ENCODE measurements at regions of chr7 and their contacts with region 1.

Region 1: GRCh38 chr7:116236020-116236630 is 25.8 kb downstream of the TES start:
- DNase-seq: peak; percentile 74
- H3K4me3 ChIP-seq: no peak overlapping the region
- H3K27ac ChIP-seq: no peak overlapping the region
- H3K4me1 ChIP-seq: peaks cover 11% of the 10 kb centered on the region
- H3K27me3 ChIP-seq: no peaks in the 10 kb centered on the region
- CTCF ChIP-seq: peak; percentile 22 to 24
- POLR2A ChIP-seq: no peak

Region 2: GRCh38 chr7:116138202-116138801 is 97.8 kb before region 1 on chr7:
- CTCF ChIA-PET with region 1: interaction called, 15 read pairs
- POLR2A ChIA-PET with region 1: no interaction called
- dilution Hi-C with region 1: no loop called
- intact Hi-C with region 1: loop called (anchors 1 kb)
- DNase-seq: peak; percentile 81
- H3K4me3 ChIP-seq: no peak overlapping the region
- H3K27ac ChIP-seq: no peak overlapping the region
- H3K4me1 ChIP-seq: peaks cover 6% of the 10 kb centered on the region
- H3K27me3 ChIP-seq: no peaks in the 10 kb centered on the region
- CTCF ChIP-seq: peak; percentile 45 to 51
- POLR2A ChIP-seq: no peak

Region 3: DNA sequence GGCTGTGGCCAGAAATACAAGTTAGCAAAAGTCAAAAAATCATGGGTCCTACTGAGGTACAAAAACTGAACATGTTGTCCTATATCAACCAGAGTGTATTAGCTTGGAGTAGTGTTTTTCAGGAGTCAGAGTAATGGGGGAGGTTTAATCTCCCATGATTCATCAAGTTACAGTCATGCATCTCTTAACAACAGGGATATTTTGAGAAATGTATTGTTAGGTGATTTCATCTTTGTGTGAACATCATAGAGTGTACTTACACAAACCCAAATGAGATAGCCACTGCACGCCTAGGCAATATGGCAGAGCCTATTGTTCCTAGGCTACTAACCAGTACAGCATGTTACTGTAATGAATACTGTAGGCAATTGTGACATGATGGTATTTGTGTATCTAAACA is 40.7 kb before region 1 on chr7:
- CTCF ChIA-PET with region 1: interaction called, 11 read pairs
- POLR2A ChIA-PET with region 1: no interaction called
- dilution Hi-C with region 1: no loop called
- intact Hi-C with region 1: no loop called
- DNase-seq: peak; percentile 8
- H3K4me3 ChIP-seq: no peak overlapping the region
- H3K27ac ChIP-seq: no peak overlapping the region
- H3K4me1 ChIP-seq: no peaks in the 10 kb centered on the region
- H3K27me3 ChIP-seq: no peaks in the 10 kb centered on the region
- CTCF ChIP-seq: no peak
- POLR2A ChIP-seq: no peak

Region 4: DNA sequence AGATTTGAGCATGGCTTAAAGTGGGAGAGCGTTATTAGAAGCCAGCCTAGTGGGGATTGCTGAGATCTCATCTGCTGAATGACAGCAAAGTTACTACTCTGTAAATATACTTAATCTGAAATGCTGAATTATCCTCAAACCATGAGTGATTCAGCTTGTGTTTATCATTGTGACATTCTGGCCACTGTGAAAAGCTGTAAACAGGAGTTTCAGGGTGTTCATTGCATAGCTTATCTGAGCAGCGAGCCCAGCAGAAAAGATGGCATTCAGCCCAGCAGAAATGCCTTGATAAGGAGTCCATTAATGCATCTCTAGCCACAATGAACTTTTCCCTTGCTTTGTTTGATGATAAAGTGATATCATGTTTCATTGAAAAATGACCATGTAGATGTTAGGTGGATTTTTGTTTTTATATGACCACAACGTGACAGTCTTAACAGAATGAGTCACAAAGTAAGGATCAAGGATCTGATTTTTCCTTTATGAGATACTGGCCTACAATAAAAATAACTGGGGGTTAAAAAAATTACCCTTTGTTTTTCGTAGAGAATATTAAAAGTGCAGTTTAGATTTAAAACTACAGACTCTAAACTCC is 18.0 kb before region 1 on chr7:
- CTCF ChIA-PET with region 1: interaction called, 22 read pairs
- POLR2A ChIA-PET with region 1: no interaction called
- dilution Hi-C with region 1: no loop called
- intact Hi-C with region 1: no loop called
- DNase-seq: peak; percentile 97
- H3K4me3 ChIP-seq: peak overlapping the region in 1 of 3 experiments; percentile 28
- H3K27ac ChIP-seq: peak overlapping the region; percentile 96
- H3K4me1 ChIP-seq: peaks cover 56% of the 10 kb centered on the region
- H3K27me3 ChIP-seq: no peaks in the 10 kb centered on the region
- CTCF ChIP-seq: no peak
- POLR2A ChIP-seq: no peak

Region 5: DNA sequence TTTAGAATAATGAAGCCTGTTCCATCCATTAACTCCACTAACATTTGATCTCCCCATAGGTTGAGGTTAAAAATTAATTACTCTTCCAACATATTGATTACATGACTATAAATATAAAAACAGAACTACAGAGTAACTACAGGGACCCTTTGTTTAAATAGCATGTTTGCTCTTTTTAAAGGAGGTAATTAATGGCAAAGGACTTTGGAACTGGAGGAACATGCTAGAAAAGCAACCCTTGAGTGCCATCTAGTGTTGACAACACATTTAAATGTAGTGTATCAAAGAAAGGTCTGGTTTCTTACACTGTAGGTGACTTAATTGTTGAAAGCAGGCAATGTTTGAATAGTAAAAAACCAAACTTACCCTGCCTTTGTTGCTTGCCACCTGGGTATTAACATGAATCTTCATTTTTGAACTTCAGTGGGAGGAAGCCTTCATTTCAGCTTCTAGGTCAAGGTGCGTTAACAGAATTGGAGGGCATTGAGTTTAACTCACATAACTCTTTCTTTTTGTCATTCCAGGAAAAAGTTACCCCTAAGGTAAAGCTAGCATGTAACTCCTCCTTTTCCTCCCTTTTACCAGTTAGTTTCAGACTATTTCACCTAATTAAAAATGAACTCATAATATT is 573.6 kb after region 1 on chr7:
- CTCF ChIA-PET with region 1: no interaction called
- POLR2A ChIA-PET with region 1: no interaction called
- dilution Hi-C with region 1: no loop called
- intact Hi-C with region 1: loop called (anchors 5 kb)
- DNase-seq: peak; percentile 86
- H3K4me3 ChIP-seq: no peak overlapping the region
- H3K27ac ChIP-seq: no peak overlapping the region
- H3K4me1 ChIP-seq: peaks cover 19% of the 10 kb centered on the region
- H3K27me3 ChIP-seq: no peaks in the 10 kb centered on the region
- CTCF ChIP-seq: peak; percentile 25 to 43
- POLR2A ChIP-seq: no peak